AG04450 (cell line): ENCODE measurements at regions of chr6 and their contacts with region 1.

Region 1: GRCh38 chr6:166005944-166006899 is 161.4 kb downstream of the TBXT start:
- DNase-seq: no peak
- H3K4me3 ChIP-seq: peak overlapping the region; percentile 53
- H3K27ac ChIP-seq: peak overlapping the region; percentile 94
- H3K27me3 ChIP-seq: no peaks in the 10 kb centered on the region
- CTCF ChIP-seq: no peak

Region 2: GRCh38 chr6:165884813-165885765 is 121.1 kb before region 1 on chr6:
- CTCF ChIA-PET with region 1: interaction called, 15 read pairs
- POLR2A ChIA-PET with region 1: no interaction called
- DNase-seq: peak; percentile 45
- H3K4me3 ChIP-seq: no peak overlapping the region
- H3K27ac ChIP-seq: no peak overlapping the region
- H3K27me3 ChIP-seq: no peaks in the 10 kb centered on the region
- CTCF ChIP-seq: peak; percentile 96

Region 3: DNA sequence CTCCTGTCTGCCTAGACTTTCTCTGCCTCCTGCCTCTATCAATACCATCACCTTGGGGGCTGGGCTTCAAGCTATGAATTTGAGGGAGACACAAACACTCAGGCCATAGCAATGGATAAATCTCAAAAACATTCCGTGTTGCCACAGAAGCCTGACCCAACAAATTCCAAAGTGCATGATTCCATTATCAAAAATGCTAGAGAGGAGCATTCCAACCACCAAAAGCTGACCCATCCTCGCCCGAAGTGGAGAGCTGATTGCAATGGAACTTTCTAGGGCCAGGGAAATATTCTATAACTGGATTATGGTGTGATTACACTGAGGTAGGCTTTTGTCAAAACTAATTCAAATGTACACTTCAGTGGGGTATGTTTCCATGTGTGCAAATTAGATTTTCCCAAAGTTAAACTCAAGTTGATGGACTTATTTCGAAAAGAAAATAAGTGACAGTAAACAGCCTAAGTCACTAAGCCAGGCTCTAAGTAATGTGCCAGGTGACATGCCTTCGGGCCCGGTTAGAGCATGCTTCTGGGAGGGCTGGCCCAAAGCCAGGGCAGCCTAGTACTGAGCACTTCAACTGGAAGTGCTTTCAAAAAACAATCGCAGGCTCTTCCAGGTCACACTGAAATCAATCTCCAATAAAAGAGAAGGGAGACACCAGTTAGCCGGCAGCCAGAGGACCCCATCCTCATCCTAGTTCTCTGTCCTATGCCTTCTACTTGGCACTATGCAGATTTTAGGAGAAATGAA is 19.1 kb after region 1 on chr6:
- CTCF ChIA-PET with region 1: interaction called, 4 read pairs
- POLR2A ChIA-PET with region 1: interaction called, 17 read pairs
- DNase-seq: peak; percentile 73
- H3K4me3 ChIP-seq: no peak overlapping the region
- H3K27ac ChIP-seq: peak overlapping the region; percentile 93
- H3K27me3 ChIP-seq: no peaks in the 10 kb centered on the region
- CTCF ChIP-seq: no peak

Region 4: DNA sequence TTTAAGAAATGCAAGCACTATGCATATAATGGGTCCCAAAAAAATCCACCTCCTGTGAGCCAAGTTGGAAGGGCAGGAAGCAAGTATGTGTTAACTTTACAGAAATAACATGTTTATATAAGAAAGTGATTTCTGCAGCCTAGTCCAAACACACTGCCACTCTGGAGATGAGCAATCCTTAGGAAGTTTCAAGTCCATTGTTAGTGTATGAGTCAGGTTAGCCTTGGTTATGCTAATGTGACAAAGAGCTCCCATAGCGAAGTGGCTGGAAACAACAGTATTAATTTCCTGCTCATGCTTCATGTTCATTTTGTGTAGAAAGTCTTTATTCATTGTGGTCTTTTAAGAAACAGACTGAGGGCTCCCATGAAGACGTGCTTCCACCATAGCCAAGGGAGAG is 40.0 kb after region 1 on chr6:
- CTCF ChIA-PET with region 1: no interaction called
- POLR2A ChIA-PET with region 1: interaction called, 13 read pairs
- DNase-seq: peak; percentile 95
- H3K4me3 ChIP-seq: no peak overlapping the region
- H3K27ac ChIP-seq: peak overlapping the region; percentile 85
- H3K27me3 ChIP-seq: no peaks in the 10 kb centered on the region
- CTCF ChIP-seq: no peak

Region 5: GRCh38 chr6:166068768-166069167 is 62.5 kb after region 1 on chr6:
- CTCF ChIA-PET with region 1: no interaction called
- POLR2A ChIA-PET with region 1: no interaction called
- DNase-seq: no peak
- H3K4me3 ChIP-seq: no peak overlapping the region
- H3K27ac ChIP-seq: no peak overlapping the region
- H3K27me3 ChIP-seq: peaks cover 9% of the 10 kb centered on the region
- CTCF ChIP-seq: no peak